ENCODE measurements at regions of chr2 and their contacts with region 1.

Region 1: DNA sequence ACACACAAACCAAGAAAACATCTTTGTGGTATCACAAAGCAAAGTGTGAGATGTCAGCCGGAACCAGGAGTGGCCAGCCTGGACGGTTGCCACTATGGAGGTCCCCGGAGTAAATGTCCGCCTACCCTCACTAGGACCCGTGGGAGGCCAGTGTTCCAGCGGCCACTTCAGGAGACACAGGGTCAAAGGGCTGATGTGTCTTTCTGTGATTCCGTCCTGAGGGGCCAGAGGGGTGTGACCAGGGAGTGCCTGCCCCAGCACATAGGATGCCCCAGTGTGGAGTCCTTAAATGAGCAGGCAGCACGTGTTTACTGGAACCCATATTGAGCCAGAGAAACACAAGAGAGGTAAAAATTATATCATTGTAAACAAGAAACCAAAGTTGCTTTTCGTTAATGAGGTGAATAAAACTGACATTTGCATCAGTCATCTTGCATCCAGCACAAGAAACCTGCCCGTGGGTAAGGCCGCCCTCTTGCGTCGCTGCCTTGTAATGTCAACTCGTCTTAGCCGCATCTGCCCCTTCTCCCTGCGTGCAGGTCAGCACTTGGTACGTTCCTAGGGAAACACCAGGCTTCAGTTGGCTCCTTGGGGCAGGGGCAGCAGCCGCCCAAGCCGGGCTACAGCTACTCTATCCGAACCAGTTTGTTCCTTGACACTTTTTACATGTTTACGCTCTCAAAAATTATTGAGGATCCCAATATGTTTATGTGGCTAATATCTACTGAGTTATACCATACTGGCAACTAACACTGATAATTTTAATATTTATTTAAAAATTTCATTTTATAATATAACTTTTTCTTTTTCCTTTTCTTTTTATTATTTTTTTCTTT is 46.7 kb upstream of the LAPTM4A start:
- DNase-seq: peak; percentile 76
- H3K4me3 ChIP-seq: no peak overlapping the region
- H3K27ac ChIP-seq: no peak overlapping the region
- H3K4me1 ChIP-seq: peaks cover 23% of the 10 kb centered on the region
- H3K27me3 ChIP-seq: no peaks in the 10 kb centered on the region
- CTCF ChIP-seq: peak; percentile 93 to 96

Region 2: GRCh38 chr2:19369341-19369955 is 728.6 kb before region 1 on chr2:
- CTCF ChIA-PET with region 1: no interaction called
- dilution Hi-C with region 1: no loop called
- in situ Hi-C with region 1: no loop called
- intact Hi-C with region 1: loop called (anchors 5 kb)
- DNase-seq: peak; percentile 51
- H3K4me3 ChIP-seq: no peak overlapping the region
- H3K27ac ChIP-seq: no peak overlapping the region
- H3K4me1 ChIP-seq: no peaks in the 10 kb centered on the region
- H3K27me3 ChIP-seq: no peaks in the 10 kb centered on the region
- CTCF ChIP-seq: peak; percentile 82 to 84

Region 3: GRCh38 chr2:19835781-19836281 is 262.3 kb before region 1 on chr2:
- CTCF ChIA-PET with region 1: no interaction called
- dilution Hi-C with region 1: no loop called
- in situ Hi-C with region 1: no loop called
- intact Hi-C with region 1: no loop called
- DNase-seq: no peak
- H3K4me3 ChIP-seq: no peak overlapping the region
- H3K27ac ChIP-seq: no peak overlapping the region
- H3K4me1 ChIP-seq: no peaks in the 10 kb centered on the region
- H3K27me3 ChIP-seq: no peaks in the 10 kb centered on the region
- CTCF ChIP-seq: no peak

Region 4: DNA sequence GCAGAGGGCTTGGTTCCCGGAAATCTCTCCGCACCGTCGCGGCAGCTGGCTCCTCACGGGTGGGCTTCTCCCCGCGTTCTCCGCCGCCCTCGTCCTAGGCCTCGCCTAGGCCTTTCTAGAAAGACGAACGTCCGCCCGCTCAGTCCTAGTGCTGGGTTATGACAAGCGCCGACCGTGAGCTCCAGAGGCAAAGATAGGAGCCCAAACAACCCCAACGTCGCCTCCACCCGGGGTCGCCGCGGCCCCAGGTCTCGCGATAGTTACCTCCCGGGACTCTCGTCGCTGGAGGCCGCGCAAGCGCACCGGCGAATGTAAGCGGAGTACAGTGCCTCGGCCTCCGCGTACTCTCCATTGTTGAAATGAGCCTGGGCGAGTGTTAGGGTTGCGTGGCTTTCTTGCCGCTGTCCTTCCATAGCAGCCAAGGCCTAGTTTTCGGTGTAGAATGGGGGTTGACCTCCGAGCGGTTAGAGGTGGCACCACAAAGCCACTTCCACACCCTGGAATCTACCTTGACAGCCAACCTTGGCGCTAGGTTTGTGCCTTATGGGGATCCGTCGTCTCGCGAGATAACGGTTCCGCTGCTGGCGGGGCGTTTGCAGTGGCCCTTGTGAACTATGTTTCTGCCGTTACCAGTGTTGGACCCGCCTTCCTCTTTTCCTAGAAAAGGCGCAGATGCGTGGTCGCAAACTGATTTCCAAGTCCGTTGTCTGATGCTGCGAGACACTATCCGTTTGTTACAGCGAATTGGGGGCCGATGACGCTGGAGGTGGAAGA is 196.5 kb before region 1 on chr2 and contains the start of gene TTC32:
- CTCF ChIA-PET with region 1: no interaction called
- dilution Hi-C with region 1: no loop called
- in situ Hi-C with region 1: no loop called
- intact Hi-C with region 1: loop called (anchors 2 kb)
- DNase-seq: peak; percentile 95
- H3K4me3 ChIP-seq: peak within 1 kb of the TSS; percentile 92 to 94 (median 93)
- H3K27ac ChIP-seq: peak within 1 kb of the TSS; percentile 97
- H3K4me1 ChIP-seq: peaks cover 23% of the 10 kb centered on the region
- H3K27me3 ChIP-seq: no peaks in the 10 kb centered on the region
- CTCF ChIP-seq: no peak
- total RNA-seq, gene TTC32: 8.0 to 12.5 TPM

Region 5: DNA sequence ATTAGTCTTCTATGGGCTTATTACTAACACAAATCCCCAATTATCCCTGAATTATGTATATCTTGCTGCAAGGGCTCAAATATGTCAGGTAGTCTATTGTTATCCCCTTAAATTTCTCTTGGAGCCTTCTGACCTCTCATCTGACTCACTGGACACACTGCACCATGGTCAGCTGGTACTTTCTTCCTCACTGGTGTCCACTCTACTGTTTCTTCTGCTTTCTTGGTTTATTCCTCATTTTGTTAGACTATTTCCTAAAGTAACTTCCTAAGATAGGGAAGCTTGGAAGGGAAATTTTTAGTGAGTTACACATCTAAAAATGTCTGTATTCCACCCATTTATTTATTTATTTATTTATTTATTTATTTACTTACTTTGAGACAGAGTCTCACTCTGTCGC is 134.7 kb before region 1 on chr2:
- CTCF ChIA-PET with region 1: no interaction called
- dilution Hi-C with region 1: loop called (anchors 5 kb)
- in situ Hi-C with region 1: loop called in 1 of 2 experiments (anchors 5 kb)
- intact Hi-C with region 1: no loop called
- DNase-seq: no peak
- H3K4me3 ChIP-seq: no peak overlapping the region
- H3K27ac ChIP-seq: no peak overlapping the region
- H3K4me1 ChIP-seq: no peaks in the 10 kb centered on the region
- H3K27me3 ChIP-seq: no peaks in the 10 kb centered on the region
- CTCF ChIP-seq: no peak

Region 6: GRCh38 chr2:20015472-20016083 is 82.5 kb before region 1 on chr2:
- CTCF ChIA-PET with region 1: interaction called, 10 read pairs
- dilution Hi-C with region 1: no loop called
- in situ Hi-C with region 1: loop called in 1 of 2 experiments (anchors 10 kb)
- intact Hi-C with region 1: loop called (anchors 1 kb)
- DNase-seq: peak; percentile 43
- H3K4me3 ChIP-seq: no peak overlapping the region
- H3K27ac ChIP-seq: no peak overlapping the region
- H3K4me1 ChIP-seq: peaks cover 13% of the 10 kb centered on the region
- H3K27me3 ChIP-seq: no peaks in the 10 kb centered on the region
- CTCF ChIP-seq: peak; percentile 37 to 57

Measured in mammary epithelial cell (primary cell).